CD8-positive, alpha-beta T cell (primary cell): ENCODE measurements at regions of chr5 and their contacts with region 1.

Region 1: GRCh38 chr5:59188419-59189225 is 605.7 kb downstream of the RAB3C start:
- DNase-seq: peak; percentile 8 to 80 (median 57)
- ATAC-seq: peak; percentile 79
- H3K4me3 ChIP-seq: no peak overlapping the region
- H3K4me3 Mint-ChIP-seq: peak overlapping the region; percentile 5
- H3K27ac ChIP-seq: no peak overlapping the region
- H3K27ac Mint-ChIP-seq: no peak overlapping the region
- H3K4me1 ChIP-seq: no peaks in the 10 kb centered on the region
- H3K4me1 Mint-ChIP-seq: peaks cover 3% of the 10 kb centered on the region
- H3K27me3 ChIP-seq: no peaks in the 10 kb centered on the region
- H3K27me3 Mint-ChIP-seq: peaks cover 14% of the 10 kb centered on the region
- CTCF ChIP-seq: peak; percentile 98

Region 2: DNA sequence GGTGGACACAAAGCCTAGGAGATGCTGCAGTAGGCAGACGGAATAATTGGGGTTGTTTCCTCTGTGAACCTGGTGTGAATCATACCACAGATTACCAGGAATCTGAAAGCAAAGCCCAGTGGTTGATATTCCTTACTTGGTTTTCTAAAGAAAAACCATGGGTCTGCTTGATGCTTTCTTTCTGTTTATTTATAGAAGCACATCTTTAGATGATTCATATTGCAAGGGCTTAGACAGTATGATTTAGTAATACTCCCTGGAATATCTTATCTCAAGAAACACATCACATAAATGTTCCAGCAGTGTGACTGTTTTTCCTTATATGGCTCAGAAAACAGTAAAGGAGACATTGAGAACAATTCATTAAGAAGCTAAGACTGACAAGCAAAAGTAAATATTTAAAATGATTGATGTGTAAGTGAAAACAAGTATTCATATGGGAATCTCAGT is 17.5 kb after region 1 on chr5:
- CTCF ChIA-PET with region 1: interaction called, 11 read pairs
- POLR2A ChIA-PET with region 1: no interaction called
- intact Hi-C with region 1: no loop called
- DNase-seq: no peak
- ATAC-seq: no peak
- H3K4me3 ChIP-seq: no peak overlapping the region
- H3K4me3 Mint-ChIP-seq: no peak overlapping the region
- H3K27ac ChIP-seq: no peak overlapping the region
- H3K27ac Mint-ChIP-seq: no peak overlapping the region
- H3K4me1 ChIP-seq: no peaks in the 10 kb centered on the region
- H3K4me1 Mint-ChIP-seq: no peaks in the 10 kb centered on the region
- H3K27me3 ChIP-seq: no peaks in the 10 kb centered on the region
- H3K27me3 Mint-ChIP-seq: peaks cover 3% of the 10 kb centered on the region
- CTCF ChIP-seq: no peak

Region 3: GRCh38 chr5:59367791-59368394 is 179.3 kb after region 1 on chr5:
- CTCF ChIA-PET with region 1: interaction called, 46 read pairs
- POLR2A ChIA-PET with region 1: no interaction called
- intact Hi-C with region 1: loop called (anchors 1 kb)
- DNase-seq: peak; percentile 1 to 64 (median 40)
- ATAC-seq: peak; percentile 46
- H3K4me3 ChIP-seq: no peak overlapping the region
- H3K4me3 Mint-ChIP-seq: no peak overlapping the region
- H3K27ac ChIP-seq: no peak overlapping the region
- H3K27ac Mint-ChIP-seq: no peak overlapping the region
- H3K4me1 ChIP-seq: no peaks in the 10 kb centered on the region
- H3K4me1 Mint-ChIP-seq: no peaks in the 10 kb centered on the region
- H3K27me3 ChIP-seq: no peaks in the 10 kb centered on the region
- H3K27me3 Mint-ChIP-seq: peaks cover 17% of the 10 kb centered on the region
- CTCF ChIP-seq: peak; percentile 63

Region 4: GRCh38 chr5:59673438-59674058 is 484.9 kb after region 1 on chr5:
- CTCF ChIA-PET with region 1: interaction called, 7 read pairs
- POLR2A ChIA-PET with region 1: no interaction called
- intact Hi-C with region 1: loop called in 1 of 2 experiments (anchors 1 kb)
- DNase-seq: peak in 2 of 9 experiments; percentile 28 to 52
- ATAC-seq: no peak
- H3K4me3 ChIP-seq: no peak overlapping the region
- H3K4me3 Mint-ChIP-seq: no peak overlapping the region
- H3K27ac ChIP-seq: no peak overlapping the region
- H3K27ac Mint-ChIP-seq: no peak overlapping the region
- H3K4me1 ChIP-seq: no peaks in the 10 kb centered on the region
- H3K4me1 Mint-ChIP-seq: no peaks in the 10 kb centered on the region
- H3K27me3 ChIP-seq: no peaks in the 10 kb centered on the region
- H3K27me3 Mint-ChIP-seq: peaks cover 2% of the 10 kb centered on the region
- CTCF ChIP-seq: peak; percentile 88

Region 5: DNA sequence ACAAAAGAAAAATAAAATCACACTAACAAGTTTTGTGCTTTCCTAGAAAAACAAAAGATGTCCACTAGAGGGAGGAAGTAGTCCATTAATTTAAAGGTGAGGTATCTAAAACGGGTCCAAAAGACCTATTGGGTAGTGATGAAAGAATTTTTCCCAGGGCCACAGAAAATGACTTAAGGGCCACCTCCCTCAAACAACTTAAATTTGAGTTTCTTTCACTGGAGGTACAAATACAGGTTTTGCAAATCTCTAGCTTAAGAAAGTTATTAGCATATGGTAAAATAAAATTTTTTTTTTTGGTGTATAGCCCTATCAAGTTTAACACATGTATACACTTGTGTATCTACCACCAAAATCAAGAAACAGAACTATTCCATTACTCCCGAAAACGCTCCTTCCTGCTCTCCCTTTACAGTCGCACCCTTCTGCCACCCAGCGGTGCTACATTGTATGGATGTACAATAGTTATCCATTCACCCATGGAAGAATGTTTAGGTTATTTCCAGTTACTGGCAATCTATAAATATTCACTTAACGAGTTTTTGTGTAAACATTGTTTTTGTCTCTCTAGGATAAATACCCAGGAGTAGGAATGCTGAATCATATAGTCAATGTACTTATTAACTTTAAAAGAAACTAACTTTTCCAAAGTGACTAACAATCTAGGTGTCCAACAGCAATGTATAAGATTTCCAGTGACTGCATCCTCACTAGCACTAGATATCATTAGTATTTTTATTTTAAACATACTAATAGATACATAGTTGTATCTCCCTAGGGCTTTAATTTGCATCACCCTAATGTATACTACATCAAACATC is 1489.4 kb after region 1 on chr5:
- CTCF ChIA-PET with region 1: no interaction called
- POLR2A ChIA-PET with region 1: no interaction called
- intact Hi-C with region 1: loop called in 1 of 2 experiments (anchors 10 kb)
- DNase-seq: peak in 2 of 9 experiments; percentile 34 to 51
- ATAC-seq: no peak
- H3K4me3 ChIP-seq: no peak overlapping the region
- H3K4me3 Mint-ChIP-seq: no peak overlapping the region
- H3K27ac ChIP-seq: no peak overlapping the region
- H3K27ac Mint-ChIP-seq: no peak overlapping the region
- H3K4me1 ChIP-seq: no peaks in the 10 kb centered on the region
- H3K4me1 Mint-ChIP-seq: no peaks in the 10 kb centered on the region
- H3K27me3 ChIP-seq: no peaks in the 10 kb centered on the region
- H3K27me3 Mint-ChIP-seq: no peaks in the 10 kb centered on the region
- CTCF ChIP-seq: peak; percentile 51